ENCODE measurements at regions of chr17 and their contacts with region 1.

Region 1: DNA sequence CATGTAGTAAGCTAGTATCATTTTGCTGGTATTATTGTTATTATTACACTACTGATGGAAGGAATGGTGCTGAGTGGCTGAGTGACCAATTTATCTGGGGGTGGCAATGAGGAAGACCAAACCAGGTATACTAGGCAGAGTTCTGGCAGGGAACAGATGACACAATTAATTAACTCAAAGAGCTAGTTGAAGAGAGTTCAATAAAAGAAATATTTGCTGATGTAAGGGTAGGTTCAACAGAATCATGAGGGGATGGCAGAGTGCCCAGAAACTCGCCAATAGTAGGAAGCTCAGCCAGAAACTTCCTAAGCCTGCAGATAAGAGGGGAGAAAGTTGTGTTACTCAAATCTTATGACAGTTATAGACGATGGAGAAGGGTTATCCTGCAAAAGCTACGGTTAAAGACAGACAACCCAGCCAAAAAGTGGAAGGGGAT is 352.5 kb downstream of the KCNJ2 start:
- DNase-seq: peak; percentile 70
- ATAC-seq: peak; percentile 88

Region 2: DNA sequence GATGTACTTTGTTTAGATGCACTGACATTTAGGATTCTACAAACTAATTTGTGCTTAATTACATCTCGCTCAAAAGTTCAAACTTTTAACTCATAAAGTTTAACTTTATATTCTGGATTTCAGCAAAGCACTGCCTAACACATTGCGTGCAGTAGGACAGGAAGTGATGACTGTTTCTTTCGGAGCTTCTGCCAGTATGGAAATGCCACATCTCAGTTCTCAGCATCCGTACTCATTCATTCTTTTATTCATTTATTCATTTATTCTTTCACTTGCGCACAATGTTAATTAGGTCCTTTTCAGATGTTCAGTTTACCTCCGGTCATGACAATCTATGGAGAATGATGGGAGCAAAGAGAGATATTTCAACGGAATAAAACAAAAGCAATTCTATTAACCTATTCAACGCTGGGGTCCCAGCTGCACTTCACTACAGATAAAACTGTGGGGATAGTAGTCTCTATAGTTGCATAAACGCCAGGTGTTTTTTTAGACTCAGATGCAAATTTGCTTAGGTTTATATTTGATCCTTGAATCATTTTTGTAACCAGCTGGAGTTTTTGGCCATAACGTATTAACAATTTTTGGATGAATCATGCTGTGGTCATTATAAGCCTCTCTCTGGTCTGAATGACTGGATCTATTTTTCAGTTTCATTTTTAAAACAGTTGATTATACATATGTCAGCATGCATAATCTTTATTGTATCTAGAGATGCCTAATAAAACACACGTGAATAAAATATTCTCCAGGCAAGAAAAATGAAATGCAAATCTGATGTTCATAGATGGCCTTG is 208.6 kb before region 1 on chr17:
- intact Hi-C with region 1: loop called (anchors 10 kb)
- DNase-seq: no peak
- ATAC-seq: no peak

Region 3: GRCh38 chr17:70478902-70479301 is 42.9 kb before region 1 on chr17:
- intact Hi-C with region 1: loop called (anchors 10 kb)
- DNase-seq: no peak
- ATAC-seq: peak; percentile 85

Measured in Right ventricle myocardium inferior (tissue), 1 donor.